Ovary (tissue), 10 donors: ENCODE measurements at regions of chr20 and their contacts with region 1.

Region 1: DNA sequence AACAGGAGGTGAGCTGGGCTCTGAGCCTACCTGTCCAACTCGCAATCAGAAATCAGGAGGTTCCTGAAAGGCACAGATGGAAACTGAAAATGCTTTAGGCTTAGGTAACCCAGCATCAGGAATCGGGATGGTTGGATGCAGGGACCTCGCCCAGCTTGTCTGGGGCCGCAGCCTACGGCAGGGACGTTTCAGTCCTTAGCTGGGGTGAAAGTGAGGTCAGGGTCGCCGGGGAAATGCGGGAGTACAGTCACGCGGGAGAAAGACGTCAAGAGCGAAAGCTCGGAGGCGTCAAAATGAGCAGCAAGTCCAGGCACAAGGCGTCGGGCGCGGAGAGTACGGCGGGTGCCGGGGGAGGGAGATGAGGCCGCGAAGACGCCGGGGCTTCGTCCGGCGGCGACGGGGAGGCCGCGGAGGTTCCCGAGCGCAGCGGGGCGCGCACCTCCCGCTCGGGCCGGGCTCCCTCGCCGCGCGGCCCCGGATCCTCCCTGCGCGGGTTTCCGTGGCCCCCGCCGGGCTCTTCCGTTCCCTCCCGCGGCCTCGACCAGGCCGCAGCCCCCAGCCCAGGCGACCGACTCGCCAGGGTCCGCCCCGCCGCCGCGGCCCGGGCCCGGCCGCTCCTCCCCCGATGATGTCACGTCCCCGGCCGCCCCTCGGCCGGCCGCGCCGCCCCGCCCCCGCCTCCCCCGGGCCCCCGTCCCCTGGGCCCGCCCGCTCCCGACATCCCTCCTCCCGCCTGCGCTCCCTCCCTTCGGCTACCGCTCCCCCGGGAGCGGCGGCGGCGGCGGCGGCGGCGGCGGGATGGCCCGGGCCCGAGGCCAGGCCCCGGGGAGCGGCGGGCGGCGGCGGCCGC is at the start of gene EBF4:
- DNase-seq: peak; percentile 82 to 89 (median 86)
- H3K4me3 ChIP-seq: peak within 1 kb of the TSS; percentile 64
- H3K27ac ChIP-seq: peak within 1 kb of the TSS; percentile 100
- H3K4me1 ChIP-seq: no peaks in the 10 kb centered on the region
- H3K27me3 ChIP-seq: no peaks in the 10 kb centered on the region
- CTCF ChIP-seq: no peak
- EP300 ChIP-seq: no peak
- POLR2A ChIP-seq: peak; percentile 71
- total RNA-seq, gene EBF4: 17.6 to 67.7 (median 55.5) TPM

Region 2: GRCh38 chr20:2651772-2652723 is 40.2 kb before region 1 on chr20 and contains the start of gene NOP56:
- intact Hi-C with region 1: loop called in 1 of 4 experiments (anchors 5 kb)
- DNase-seq: peak; percentile 91 to 98 (median 93)
- H3K4me3 ChIP-seq: peak within 1 kb of the TSS; percentile 87
- H3K27ac ChIP-seq: peak within 1 kb of the TSS; percentile 73 to 86
- H3K4me1 ChIP-seq: peaks cover 1% of the 10 kb centered on the region
- H3K27me3 ChIP-seq: no peaks in the 10 kb centered on the region
- CTCF ChIP-seq: peak in 1 of 3 donors; percentile 17
- EP300 ChIP-seq: no peak
- POLR2A ChIP-seq: peak; percentile 54
- total RNA-seq, gene NOP56: 62.0 to 181 (median 134) TPM

Region 3: GRCh38 chr20:2840138-2840966 is 148.1 kb after region 1 on chr20 and contains the starts of genes PCED1A and VPS16:
- intact Hi-C with region 1: loop called in 1 of 4 experiments (anchors 10 kb)
- DNase-seq: peak; percentile 83 to 93 (median 88)
- H3K4me3 ChIP-seq: peak within 1 kb of the TSS; percentile 99
- H3K27ac ChIP-seq: peak within 1 kb of the TSS; percentile 69 to 84
- H3K4me1 ChIP-seq: peaks cover 4% of the 10 kb centered on the region
- H3K27me3 ChIP-seq: no peaks in the 10 kb centered on the region
- CTCF ChIP-seq: peak in 1 of 3 donors; percentile 17
- EP300 ChIP-seq: no peak
- POLR2A ChIP-seq: peak; percentile 41
- total RNA-seq, gene PCED1A: 32.9 to 58.0 (median 39.1) TPM
- total RNA-seq, gene VPS16: 15.6 to 44.1 (median 31.4) TPM

Region 4: GRCh38 chr20:2859330-2860121 is 167.3 kb after region 1 on chr20:
- intact Hi-C with region 1: loop called in 1 of 4 experiments (anchors 10 kb)
- DNase-seq: no peak
- H3K4me3 ChIP-seq: no peak overlapping the region
- H3K27ac ChIP-seq: no peak overlapping the region
- H3K4me1 ChIP-seq: peaks cover 2% of the 10 kb centered on the region
- H3K27me3 ChIP-seq: no peaks in the 10 kb centered on the region
- CTCF ChIP-seq: no peak
- EP300 ChIP-seq: no peak
- POLR2A ChIP-seq: no peak